ENCODE measurements at regions of chr3 and their contacts with region 1.

Region 1: GRCh38 chr3:56855856-56856512 is 54.2 kb upstream of the ARHGEF3 start:
- DNase-seq: peak in 3 of 4 experiments; percentile 6 to 32 (median 10)
- ATAC-seq: peak; percentile 79
- H3K4me3 ChIP-seq: no peak overlapping the region
- H3K27ac ChIP-seq: no peak overlapping the region
- H3K4me1 ChIP-seq: no peaks in the 10 kb centered on the region
- H3K27me3 ChIP-seq: no peaks in the 10 kb centered on the region; a peak in 1 of 5 replicates
- CTCF ChIP-seq: peak; percentile 52 to 65 (median 57)
- EP300 ChIP-seq: no peak
- POLR2A ChIP-seq: no peak
- RAD21 ChIP-seq: peak; percentile 29 to 58

Region 2: DNA sequence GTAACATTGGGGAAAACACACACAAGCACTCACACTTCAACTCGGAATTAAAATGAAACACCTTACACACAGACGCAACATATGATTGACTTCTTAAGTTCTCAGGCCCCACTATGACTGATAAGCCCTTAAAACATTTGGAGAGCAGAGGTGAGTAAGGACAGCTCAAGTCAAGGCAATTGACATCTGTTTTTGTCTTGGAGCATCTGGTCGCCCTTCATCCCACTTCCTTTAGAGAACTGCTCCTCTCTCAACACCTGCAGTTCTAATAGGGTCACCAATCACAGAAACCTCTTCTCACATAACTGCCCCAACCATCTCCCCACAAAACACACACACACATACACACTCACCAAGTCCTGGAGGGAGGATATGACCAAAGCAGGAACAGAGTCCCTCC is 431.1 kb before region 1 on chr3:
- CTCF ChIA-PET with region 1: interaction called, 10 read pairs
- POLR2A ChIA-PET with region 1: no interaction called
- in situ Hi-C with region 1: no loop called
- intact Hi-C with region 1: no loop called
- DNase-seq: no peak
- ATAC-seq: no peak
- H3K4me3 ChIP-seq: no peak overlapping the region
- H3K27ac ChIP-seq: no peak overlapping the region
- H3K4me1 ChIP-seq: no peaks in the 10 kb centered on the region
- H3K27me3 ChIP-seq: no peaks in the 10 kb centered on the region
- CTCF ChIP-seq: no peak
- EP300 ChIP-seq: no peak
- POLR2A ChIP-seq: no peak
- RAD21 ChIP-seq: no peak

Region 3: DNA sequence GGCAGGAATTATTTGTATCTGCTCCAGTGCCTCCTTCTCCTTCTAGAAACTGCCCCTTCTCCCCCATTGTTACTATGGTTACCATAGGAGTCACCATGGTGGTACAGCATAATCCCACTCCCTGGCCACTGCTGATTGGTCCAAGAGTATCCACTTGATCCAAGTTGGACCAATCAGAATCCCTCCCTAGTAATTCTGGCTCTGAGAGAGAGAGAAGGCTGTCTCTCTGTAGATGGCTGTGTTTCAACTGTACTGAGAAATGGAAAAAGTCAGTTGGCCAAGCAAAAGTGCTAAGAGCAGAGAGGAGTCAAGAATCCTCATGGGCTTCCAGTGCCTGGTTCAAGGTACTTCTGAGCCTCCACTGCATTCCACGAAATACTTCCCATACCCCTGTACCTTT is 83.8 kb after region 1 on chr3:
- CTCF ChIA-PET with region 1: no interaction called
- POLR2A ChIA-PET with region 1: no interaction called
- in situ Hi-C with region 1: no loop called
- intact Hi-C with region 1: no loop called
- DNase-seq: peak in 3 of 4 experiments; percentile 10 to 13 (median 12)
- ATAC-seq: no peak
- H3K4me3 ChIP-seq: no peak overlapping the region
- H3K27ac ChIP-seq: no peak overlapping the region
- H3K4me1 ChIP-seq: no peaks in the 10 kb centered on the region
- H3K27me3 ChIP-seq: peaks cover 0 to 5% of the 10 kb centered on the region in 2 experiments; a peak in 2 of 5 replicates
- CTCF ChIP-seq: no peak
- EP300 ChIP-seq: no peak
- POLR2A ChIP-seq: no peak
- RAD21 ChIP-seq: no peak

Region 4: DNA sequence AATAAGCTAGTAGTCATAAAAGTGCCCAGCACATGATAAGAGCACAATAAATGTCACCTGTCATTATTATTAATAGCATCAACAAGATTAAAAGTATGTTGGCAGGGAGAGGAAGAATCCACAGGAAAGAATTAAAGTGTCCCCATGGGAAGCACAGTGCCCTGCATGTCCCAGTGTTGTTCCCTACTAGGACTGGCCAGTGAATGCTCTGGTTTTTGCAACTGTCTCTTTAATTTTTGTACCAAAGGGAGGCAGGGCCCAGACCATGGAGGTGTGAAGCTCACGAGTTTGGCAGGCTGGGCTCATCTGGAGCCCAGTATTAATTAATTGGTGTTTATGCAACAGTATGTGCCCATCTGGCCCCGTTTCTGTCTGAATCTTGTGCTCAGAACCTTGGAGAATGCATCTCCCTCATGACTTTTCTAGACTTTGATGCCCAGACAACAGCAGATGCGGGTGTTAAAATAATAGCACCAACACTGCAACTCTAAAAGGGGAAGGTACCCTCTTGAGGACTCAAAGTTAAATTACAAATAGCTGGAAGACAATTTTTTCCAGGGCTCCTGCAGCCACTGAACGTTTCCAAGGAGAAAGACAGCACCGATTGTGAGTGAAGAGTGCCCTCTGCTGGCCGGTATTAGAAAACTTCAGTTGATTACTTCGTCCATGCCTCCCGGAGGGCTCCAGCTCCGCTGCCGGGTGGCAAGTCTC is 132.6 kb after region 1 on chr3:
- CTCF ChIA-PET with region 1: interaction called, 4 read pairs
- POLR2A ChIA-PET with region 1: no interaction called
- in situ Hi-C with region 1: no loop called
- intact Hi-C with region 1: loop called (anchors 5 kb)
- DNase-seq: peak; percentile 40 to 75 (median 62)
- ATAC-seq: peak; percentile 91
- H3K4me3 ChIP-seq: no peak overlapping the region
- H3K27ac ChIP-seq: no peak overlapping the region
- H3K4me1 ChIP-seq: no peaks in the 10 kb centered on the region
- H3K27me3 ChIP-seq: peaks cover 0 to 14% of the 10 kb centered on the region in 2 experiments; a peak in 2 of 5 replicates
- CTCF ChIP-seq: peak; percentile 61 to 77 (median 67)
- EP300 ChIP-seq: no peak
- POLR2A ChIP-seq: no peak
- RAD21 ChIP-seq: peak; percentile 79 to 83